ENCODE measurements at regions of chr1 and their contacts with region 1.

Region 1: DNA sequence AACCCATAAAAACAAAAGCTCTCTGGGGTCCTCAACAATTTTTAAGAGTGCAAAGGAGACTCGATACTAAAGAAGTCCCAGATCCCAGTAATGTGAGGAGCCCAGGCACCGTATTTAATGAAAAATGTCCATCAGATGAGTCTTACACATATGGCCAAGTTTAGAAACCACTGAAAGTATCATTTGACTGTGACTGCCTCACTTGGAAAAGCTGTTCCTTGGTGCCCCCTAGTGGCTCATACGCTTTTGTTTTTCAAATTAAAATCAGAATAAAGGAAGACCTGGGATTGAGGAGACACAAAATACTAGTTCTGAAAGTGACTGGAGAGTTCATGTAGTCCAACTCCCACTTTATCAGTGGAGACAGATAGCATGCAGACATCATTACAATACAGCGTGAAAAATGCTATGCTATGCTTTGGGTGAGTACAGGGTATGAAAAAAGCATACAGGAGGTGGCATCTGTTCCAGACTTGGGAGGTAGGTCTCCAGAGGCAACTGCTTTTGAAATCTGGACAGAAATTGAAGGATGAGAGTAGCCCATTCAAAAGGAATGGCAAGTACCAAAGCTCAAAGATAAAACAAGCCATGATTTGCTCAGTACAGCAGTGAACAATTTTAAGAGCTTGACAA is 33.8 kb downstream of the GDAP2 start:
- DNase-seq: peak; percentile 54
- ATAC-seq: peak; percentile 70
- H3K4me3 ChIP-seq: no peak overlapping the region
- H3K27ac ChIP-seq: no peak overlapping the region
- H3K4me1 ChIP-seq: no peaks in the 10 kb centered on the region
- H3K27me3 ChIP-seq: no peaks in the 10 kb centered on the region
- CTCF ChIP-seq: peak; percentile 69 to 79 (median 71); a peak in 5 of 6 replicates
- POLR2A ChIP-seq: no peak
- RAD21 ChIP-seq: peak; percentile 80

Region 2: GRCh38 chr1:117512743-117513321 is 382.8 kb before region 1 on chr1:
- CTCF ChIA-PET with region 1: interaction called, 11 read pairs
- POLR2A ChIA-PET with region 1: no interaction called
- RAD21 ChIA-PET with region 1: no interaction called
- intact Hi-C with region 1: loop called (anchors 2 kb)
- DNase-seq: no peak
- ATAC-seq: peak; percentile 52; the same call in 1 of the 2 replicates
- H3K4me3 ChIP-seq: no peak overlapping the region
- H3K27ac ChIP-seq: no peak overlapping the region
- H3K4me1 ChIP-seq: no peaks in the 10 kb centered on the region
- H3K27me3 ChIP-seq: no peaks in the 10 kb centered on the region
- CTCF ChIP-seq: peak; percentile 41 to 73 (median 47); a peak in 4 of 6 replicates
- POLR2A ChIP-seq: no peak
- RAD21 ChIP-seq: peak; percentile 64

Region 3: DNA sequence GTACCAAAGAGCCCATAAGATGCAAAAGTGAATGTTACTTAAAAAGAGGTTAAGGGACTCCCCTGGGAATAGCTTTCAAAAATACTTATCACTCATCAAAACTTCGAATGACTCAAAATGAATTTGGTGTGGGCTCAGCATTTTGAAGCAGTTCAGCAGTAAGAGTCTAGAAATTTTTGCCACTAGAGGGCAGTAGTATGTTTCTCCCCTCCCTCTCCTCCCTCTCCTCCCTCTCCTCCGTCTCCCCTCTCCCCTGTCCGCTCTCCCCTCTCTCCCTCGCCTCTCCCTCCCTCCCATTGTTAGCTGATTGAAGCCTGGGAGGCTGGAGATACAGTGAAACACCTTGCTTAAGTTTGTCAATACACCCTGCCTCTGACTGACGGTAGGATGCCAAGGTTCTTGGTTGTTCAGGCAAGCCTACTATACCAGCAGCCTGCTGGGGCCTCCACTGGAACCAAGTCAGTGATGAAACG is 360.6 kb before region 1 on chr1:
- CTCF ChIA-PET with region 1: interaction called, 6 read pairs
- POLR2A ChIA-PET with region 1: no interaction called
- RAD21 ChIA-PET with region 1: no interaction called
- intact Hi-C with region 1: loop called (anchors 5 kb)
- DNase-seq: peak; percentile 35
- ATAC-seq: peak; percentile 94
- H3K4me3 ChIP-seq: no peak overlapping the region
- H3K27ac ChIP-seq: no peak overlapping the region
- H3K4me1 ChIP-seq: peaks cover 2 to 8% of the 10 kb centered on the region in 2 experiments; a peak in 1 of 4 replicates
- H3K27me3 ChIP-seq: no peaks in the 10 kb centered on the region
- CTCF ChIP-seq: peak; percentile 27 to 78 (median 67); a peak in 5 of 6 replicates
- POLR2A ChIP-seq: no peak
- RAD21 ChIP-seq: peak; percentile 52

Region 4: GRCh38 chr1:117710710-117711109 is 184.9 kb before region 1 on chr1:
- CTCF ChIA-PET with region 1: interaction called, 3 read pairs
- POLR2A ChIA-PET with region 1: no interaction called
- RAD21 ChIA-PET with region 1: no interaction called
- intact Hi-C with region 1: loop called (anchors 1 kb)
- DNase-seq: no peak
- ATAC-seq: peak; percentile 82
- H3K4me3 ChIP-seq: no peak overlapping the region
- H3K27ac ChIP-seq: no peak overlapping the region
- H3K4me1 ChIP-seq: no peaks in the 10 kb centered on the region
- H3K27me3 ChIP-seq: no peaks in the 10 kb centered on the region
- CTCF ChIP-seq: peak; percentile 24 to 60 (median 57); a peak in 5 of 6 replicates
- POLR2A ChIP-seq: no peak
- RAD21 ChIP-seq: peak; percentile 49